ENCODE measurements at regions of chr14 and their contacts with region 1.

Region 1: DNA sequence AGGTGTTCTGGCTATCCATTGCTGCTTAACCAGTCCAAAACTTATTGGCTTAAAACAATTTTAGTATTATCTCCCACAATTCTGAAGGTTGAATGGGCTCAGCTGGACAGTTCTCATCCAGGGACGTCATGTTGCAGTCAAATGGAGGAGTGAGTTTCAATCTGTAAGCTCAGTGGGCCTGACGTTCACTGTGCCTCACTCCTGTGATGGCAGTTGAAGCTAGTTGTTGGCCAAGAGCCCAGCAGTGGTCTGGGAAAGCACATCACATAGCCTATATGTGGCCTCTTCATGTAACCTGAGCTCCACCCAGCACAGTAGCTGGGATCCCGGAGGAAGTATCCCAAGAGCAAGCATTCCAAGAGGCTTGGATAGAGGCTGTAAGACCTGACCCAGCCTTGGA is 40.6 kb upstream of the CDKN3 start:
- DNase-seq: peak; percentile 58
- ATAC-seq: no peak
- H3K4me3 ChIP-seq: no peak overlapping the region
- H3K27ac ChIP-seq: peak overlapping the region; percentile 46
- H3K4me1 ChIP-seq: peaks cover 80% of the 10 kb centered on the region
- H3K27me3 ChIP-seq: no peaks in the 10 kb centered on the region
- CTCF ChIP-seq: no peak
- EP300 ChIP-seq: no peak
- POLR2A ChIP-seq: no peak
- RAD21 ChIP-seq: no peak

Region 2: GRCh38 chr14:53044486-53044885 is 1311.7 kb before region 1 on chr14:
- CTCF ChIA-PET with region 1: no interaction called
- POLR2A ChIA-PET with region 1: no interaction called
- in situ Hi-C with region 1: no loop called
- intact Hi-C with region 1: no loop called
- DNase-seq: no peak
- ATAC-seq: no peak
- H3K4me3 ChIP-seq: no peak overlapping the region
- H3K27ac ChIP-seq: no peak overlapping the region
- H3K4me1 ChIP-seq: no peaks in the 10 kb centered on the region
- H3K27me3 ChIP-seq: no peaks in the 10 kb centered on the region
- CTCF ChIP-seq: no peak
- EP300 ChIP-seq: no peak
- POLR2A ChIP-seq: no peak
- RAD21 ChIP-seq: no peak

Region 3: GRCh38 chr14:54396493-54397335 is 40.5 kb after region 1 on chr14 and contains the start of gene CDKN3:
- CTCF ChIA-PET with region 1: no interaction called
- POLR2A ChIA-PET with region 1: interaction called, 25 read pairs
- in situ Hi-C with region 1: no loop called
- intact Hi-C with region 1: loop called (anchors 2 kb)
- DNase-seq: peak; percentile 98
- ATAC-seq: peak; percentile 97
- H3K4me3 ChIP-seq: peak within 1 kb of the TSS; percentile 72 to 98 (median 89)
- H3K27ac ChIP-seq: peak within 1 kb of the TSS; percentile 76
- H3K4me1 ChIP-seq: peaks cover 33% of the 10 kb centered on the region
- H3K27me3 ChIP-seq: no peaks in the 10 kb centered on the region; a peak in 1 of 5 replicates
- CTCF ChIP-seq: peak; percentile 74
- EP300 ChIP-seq: no peak
- POLR2A ChIP-seq: peak; percentile 91 to 95
- RAD21 ChIP-seq: peak; percentile 39; the same call in 1 of the 2 replicates
- total RNA-seq, gene CDKN3: 88.9 and 111 TPM in 2 replicates

Region 4: DNA sequence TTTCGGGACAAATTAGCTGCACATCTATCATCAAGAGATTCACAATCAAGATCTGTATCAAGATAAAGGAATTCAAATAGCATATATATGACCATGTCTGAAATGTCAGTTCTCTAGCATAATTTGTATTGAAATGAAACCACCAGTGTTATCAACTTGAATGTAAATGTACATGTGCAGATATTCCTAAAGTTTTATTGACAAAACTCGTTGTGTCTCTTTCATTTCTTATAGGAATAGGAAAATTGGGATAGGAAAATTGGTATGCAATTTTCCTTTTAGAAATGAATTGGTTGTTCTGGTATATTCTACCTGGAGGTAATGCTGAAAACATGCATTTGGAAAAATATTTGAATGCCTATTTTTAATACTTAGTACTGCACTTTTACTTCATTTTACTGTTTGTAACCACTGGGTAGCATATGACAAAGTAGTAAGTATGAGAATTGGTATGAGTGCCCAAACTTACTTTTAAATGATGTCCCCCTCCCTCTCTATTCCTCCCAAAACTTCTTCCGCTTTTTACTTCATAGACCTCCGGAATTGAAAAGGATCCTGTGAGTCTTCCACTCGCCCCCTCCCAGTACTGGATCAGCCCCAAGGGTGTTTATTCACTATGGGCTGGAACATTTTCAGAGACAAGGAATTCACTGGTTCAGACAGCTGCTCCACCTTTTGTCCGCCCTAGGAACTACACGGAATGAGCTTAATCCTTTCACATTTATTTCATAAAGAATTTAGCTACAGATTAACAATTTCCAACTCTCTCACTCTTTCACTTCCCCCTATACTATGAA is 64.0 kb after region 1 on chr14:
- CTCF ChIA-PET with region 1: no interaction called
- POLR2A ChIA-PET with region 1: interaction called, 5 read pairs
- in situ Hi-C with region 1: no loop called
- intact Hi-C with region 1: loop called (anchors 1 kb)
- DNase-seq: peak; percentile 46
- ATAC-seq: peak; percentile 57
- H3K4me3 ChIP-seq: no peak overlapping the region
- H3K27ac ChIP-seq: peak overlapping the region; percentile 60
- H3K4me1 ChIP-seq: peaks cover 29% of the 10 kb centered on the region
- H3K27me3 ChIP-seq: no peaks in the 10 kb centered on the region
- CTCF ChIP-seq: peak; percentile 73
- EP300 ChIP-seq: no peak
- POLR2A ChIP-seq: no peak
- RAD21 ChIP-seq: peak; percentile 55; the same call in 1 of the 2 replicates